Lower leg skin (tissue), 4 donors: ENCODE measurements at regions of chr3 and their contacts with region 1.

Region 1: DNA sequence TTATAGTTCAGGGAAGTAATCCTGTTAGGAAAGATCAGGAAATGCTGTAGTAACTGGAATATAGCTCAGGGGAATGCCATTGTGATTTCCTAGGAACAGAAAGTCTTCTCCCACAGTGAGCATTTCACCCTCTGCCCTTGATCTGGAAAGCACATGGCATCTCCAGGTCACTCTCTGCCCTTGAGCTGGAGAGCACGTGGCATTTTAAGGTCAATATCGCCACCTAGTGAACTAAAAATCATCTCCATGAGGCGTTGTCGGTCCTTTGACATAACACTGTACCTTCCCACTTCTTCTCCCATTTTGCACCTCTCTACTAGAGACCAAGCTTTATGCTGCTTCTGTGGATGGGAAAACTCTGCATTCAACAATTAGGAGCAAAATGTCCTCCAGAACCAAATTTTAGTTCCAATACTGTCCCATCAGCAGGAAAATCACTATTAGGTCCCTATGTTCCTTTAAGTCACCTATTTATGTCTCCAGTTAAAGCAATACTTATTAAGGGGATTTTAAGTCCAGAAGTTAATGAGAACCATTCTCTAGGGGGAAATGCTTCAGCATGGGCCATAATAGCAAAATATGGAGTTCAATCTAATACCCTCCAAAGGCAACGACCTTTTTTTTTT is 54.7 kb upstream of the GK5 start:
- DNase-seq: peak in 1 of 2 donors; percentile 48
- H3K4me3 ChIP-seq: no peak overlapping the region
- CTCF ChIP-seq: no peak
- POLR2A ChIP-seq: no peak

Region 2: DNA sequence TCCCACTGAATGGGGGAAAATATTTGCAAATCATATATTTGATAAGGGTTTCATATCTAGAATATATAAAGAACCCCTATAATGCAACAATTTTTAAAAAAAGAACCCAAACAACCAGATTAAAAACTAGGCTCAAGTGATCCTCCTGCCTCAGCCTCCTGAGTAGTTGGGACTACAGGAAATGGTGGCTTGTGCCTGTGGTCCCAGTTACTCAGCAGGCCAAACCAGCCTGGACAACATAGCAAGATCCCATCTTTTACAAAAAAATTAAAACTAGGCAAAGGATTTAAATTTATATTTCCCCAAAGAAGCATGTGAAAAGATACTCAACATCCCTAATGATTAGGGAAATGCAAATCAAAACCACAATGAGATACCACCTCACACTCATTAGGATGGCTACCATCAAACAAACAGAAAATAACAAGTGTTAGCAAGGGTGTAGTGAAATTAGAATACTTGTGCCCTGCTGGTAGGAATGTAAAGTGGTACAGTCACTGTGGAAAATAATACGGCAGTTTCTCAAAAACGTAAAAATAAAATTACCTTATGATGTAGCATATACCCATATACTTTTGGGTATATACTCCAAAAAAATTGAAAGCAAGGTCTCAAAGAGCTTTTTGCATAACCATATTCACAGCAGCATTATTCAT is 150.4 kb before region 1 on chr3:
- intact Hi-C with region 1: loop called (anchors 10 kb)
- DNase-seq: no peak
- H3K4me3 ChIP-seq: no peak overlapping the region
- CTCF ChIP-seq: no peak
- POLR2A ChIP-seq: no peak